CD4-positive, alpha-beta T cell (primary cell): ENCODE measurements at regions of chr15 and their contacts with region 1.

Region 1: DNA sequence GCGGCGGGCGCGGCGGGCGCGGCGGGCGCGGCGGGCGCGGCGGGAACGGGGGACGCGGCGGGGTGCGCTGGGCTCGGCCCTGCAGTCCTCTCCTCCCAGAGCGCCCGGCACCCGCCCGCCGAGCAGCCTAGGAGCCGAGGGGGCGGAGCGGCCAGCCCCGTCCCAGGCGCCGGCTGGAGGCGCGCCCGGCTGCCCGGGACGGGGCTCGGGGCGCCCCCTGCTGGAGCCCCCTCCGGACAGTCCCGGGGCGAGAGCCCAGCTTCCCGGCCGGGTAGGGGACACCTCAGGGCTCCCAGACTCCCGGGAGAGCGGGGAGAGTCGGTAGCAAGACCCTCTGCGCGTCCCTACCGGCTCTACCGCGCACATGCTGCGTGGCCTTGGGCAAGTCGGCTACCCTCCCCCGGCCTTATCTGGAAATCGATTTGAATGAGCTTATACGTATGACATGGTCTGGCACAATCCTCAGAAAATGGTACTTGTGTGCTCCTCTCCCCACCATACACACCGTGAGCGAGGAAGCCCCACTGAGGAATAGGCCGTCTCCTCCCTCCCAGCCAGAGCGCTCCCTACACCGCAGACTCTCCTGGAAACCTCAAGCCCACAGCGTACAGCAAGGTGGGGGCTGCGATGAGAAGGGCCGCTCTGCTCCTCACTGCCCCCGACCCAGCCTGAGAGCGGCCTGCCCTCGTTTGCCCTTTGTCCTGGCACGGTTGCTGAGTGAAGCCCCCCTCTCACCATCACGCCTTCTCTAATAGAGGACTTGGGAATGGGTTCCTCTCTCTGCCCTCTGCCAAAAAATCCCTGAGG is at the start of gene DAPK2:
- DNase-seq: peak; percentile 16 to 85 (median 64)
- ATAC-seq: peak; percentile 78
- H3K4me3 ChIP-seq: peak within 1 kb of the TSS; percentile 50
- H3K4me3 Mint-ChIP-seq: peak within 1 kb of the TSS; percentile 80
- H3K27ac ChIP-seq: no peak within 1 kb of the TSS
- H3K27ac Mint-ChIP-seq: no peak within 1 kb of the TSS
- H3K4me1 ChIP-seq: peaks cover 18% of the 10 kb centered on the region
- H3K4me1 Mint-ChIP-seq: peaks cover 10% of the 10 kb centered on the region
- H3K27me3 ChIP-seq: peaks cover 0 to 9% of the 10 kb centered on the region in 2 experiments
- H3K27me3 Mint-ChIP-seq: peaks cover 20% of the 10 kb centered on the region
- CTCF ChIP-seq: peak; percentile 72
- total RNA-seq, gene DAPK2: 1.3 to 1.6 TPM

Region 2: GRCh38 chr15:63752075-63752684 is 294.4 kb before region 1 on chr15:
- CTCF ChIA-PET with region 1: interaction called, 15 read pairs
- POLR2A ChIA-PET with region 1: interaction called, 10 read pairs
- intact Hi-C with region 1: no loop called
- DNase-seq: peak in 9 of 14 experiments; percentile 15 to 74 (median 24)
- ATAC-seq: peak; percentile 73
- H3K4me3 ChIP-seq: no peak overlapping the region
- H3K4me3 Mint-ChIP-seq: no peak overlapping the region
- H3K27ac ChIP-seq: no peak overlapping the region
- H3K27ac Mint-ChIP-seq: peak overlapping the region; percentile 3
- H3K4me1 ChIP-seq: no peaks in the 10 kb centered on the region
- H3K4me1 Mint-ChIP-seq: peaks cover 6% of the 10 kb centered on the region
- H3K27me3 ChIP-seq: no peaks in the 10 kb centered on the region
- H3K27me3 Mint-ChIP-seq: no peaks in the 10 kb centered on the region
- CTCF ChIP-seq: peak; percentile 80

Region 3: GRCh38 chr15:63826528-63826927 is 220.0 kb before region 1 on chr15:
- CTCF ChIA-PET with region 1: interaction called, 4 read pairs
- POLR2A ChIA-PET with region 1: interaction called, 3 read pairs
- intact Hi-C with region 1: loop called in 1 of 2 experiments (anchors 1 kb)
- DNase-seq: peak in 4 of 14 experiments; percentile 45 to 75 (median 66)
- ATAC-seq: no peak
- H3K4me3 ChIP-seq: no peak overlapping the region
- H3K4me3 Mint-ChIP-seq: peak overlapping the region; percentile 74
- H3K27ac ChIP-seq: no peak overlapping the region
- H3K27ac Mint-ChIP-seq: peak overlapping the region; percentile 62
- H3K4me1 ChIP-seq: peaks cover 21% of the 10 kb centered on the region
- H3K4me1 Mint-ChIP-seq: peaks cover 91% of the 10 kb centered on the region
- H3K27me3 ChIP-seq: no peaks in the 10 kb centered on the region
- H3K27me3 Mint-ChIP-seq: no peaks in the 10 kb centered on the region
- CTCF ChIP-seq: peak; percentile 62

Region 4: GRCh38 chr15:63945007-63945788 is 101.4 kb before region 1 on chr15:
- CTCF ChIA-PET with region 1: interaction called, 36 read pairs
- POLR2A ChIA-PET with region 1: interaction called, 3 read pairs
- intact Hi-C with region 1: loop called (anchors 1 to 5 kb)
- DNase-seq: peak; percentile 44 to 77 (median 59)
- ATAC-seq: peak; percentile 98
- H3K4me3 ChIP-seq: no peak overlapping the region
- H3K4me3 Mint-ChIP-seq: no peak overlapping the region
- H3K27ac ChIP-seq: no peak overlapping the region
- H3K27ac Mint-ChIP-seq: peak overlapping the region; percentile 21
- H3K4me1 ChIP-seq: peaks cover 13% of the 10 kb centered on the region
- H3K4me1 Mint-ChIP-seq: peaks cover 16% of the 10 kb centered on the region
- H3K27me3 ChIP-seq: no peaks in the 10 kb centered on the region
- H3K27me3 Mint-ChIP-seq: no peaks in the 10 kb centered on the region
- CTCF ChIP-seq: peak; percentile 93

Region 5: DNA sequence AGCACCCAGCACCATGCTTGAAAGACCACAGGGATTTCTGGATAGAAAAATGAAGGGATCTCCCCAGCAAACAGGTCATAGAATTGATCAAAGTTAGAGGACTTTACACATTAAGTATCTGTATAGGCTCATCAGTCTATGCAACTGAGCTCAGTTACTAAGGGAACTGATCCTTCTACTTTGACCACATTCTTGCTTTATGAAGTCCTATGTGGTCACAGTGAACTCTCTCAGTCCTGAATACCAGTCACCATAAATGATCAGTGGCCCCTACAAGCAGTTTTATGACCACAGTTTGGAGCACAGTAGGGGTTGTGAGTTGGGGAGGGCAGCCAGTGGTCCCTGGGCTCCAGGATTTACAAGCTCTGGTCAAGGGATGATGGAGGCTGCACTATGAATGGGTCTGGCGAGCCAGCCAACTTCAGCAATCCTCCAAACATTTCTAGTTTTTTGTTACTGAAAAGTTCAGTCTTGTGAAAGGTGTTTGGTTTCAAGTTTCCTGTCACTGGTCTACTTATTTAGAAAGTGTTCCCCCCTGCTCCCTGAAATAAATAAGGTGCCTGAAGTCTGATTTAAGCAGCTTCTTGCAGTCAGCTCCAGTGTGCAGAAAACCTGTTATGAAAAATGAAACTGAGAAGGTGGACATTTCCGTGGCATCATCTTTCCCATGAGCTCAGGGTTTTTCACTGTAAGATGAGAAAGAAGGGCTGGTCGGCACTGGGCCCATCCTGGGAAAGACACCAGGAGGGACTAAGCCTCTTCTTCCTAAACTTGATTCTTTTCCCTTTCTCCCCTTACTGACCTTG is 75.7 kb before region 1 on chr15:
- CTCF ChIA-PET with region 1: interaction called, 11 read pairs
- POLR2A ChIA-PET with region 1: no interaction called
- intact Hi-C with region 1: no loop called
- DNase-seq: peak in 3 of 14 experiments; percentile 14 to 33 (median 27)
- ATAC-seq: peak; percentile 63
- H3K4me3 ChIP-seq: no peak overlapping the region
- H3K4me3 Mint-ChIP-seq: peak overlapping the region; percentile 72
- H3K27ac ChIP-seq: peak overlapping the region in 1 of 2 donors; percentile 63
- H3K27ac Mint-ChIP-seq: peak overlapping the region; percentile 85
- H3K4me1 ChIP-seq: peaks cover 39% of the 10 kb centered on the region
- H3K4me1 Mint-ChIP-seq: peaks cover 41% of the 10 kb centered on the region
- H3K27me3 ChIP-seq: no peaks in the 10 kb centered on the region
- H3K27me3 Mint-ChIP-seq: no peaks in the 10 kb centered on the region
- CTCF ChIP-seq: no peak

Region 6: DNA sequence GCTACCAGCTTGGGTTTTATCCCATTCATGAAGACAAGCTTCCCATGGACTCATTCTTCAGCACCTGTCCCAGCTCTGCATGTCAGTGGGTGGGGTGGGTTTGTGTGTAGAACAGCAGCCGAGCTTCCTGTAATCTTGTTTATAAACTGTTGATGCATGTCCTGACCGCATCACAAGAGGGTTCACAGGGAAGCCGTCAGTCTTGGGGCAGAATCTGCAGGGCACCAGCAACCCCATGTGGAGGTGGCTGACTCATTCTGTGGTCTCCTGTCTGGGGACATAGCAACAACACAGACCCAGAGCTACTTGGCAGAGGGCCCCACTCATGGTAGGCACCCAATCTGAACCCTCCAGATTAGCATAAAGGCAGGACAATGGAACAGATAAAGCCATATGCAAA is 35.8 kb before region 1 on chr15:
- CTCF ChIA-PET with region 1: interaction called, 40 read pairs
- POLR2A ChIA-PET with region 1: interaction called, 10 read pairs
- intact Hi-C with region 1: no loop called
- DNase-seq: peak; percentile 75 to 95 (median 83)
- ATAC-seq: peak; percentile 93
- H3K4me3 ChIP-seq: no peak overlapping the region
- H3K4me3 Mint-ChIP-seq: peak overlapping the region; percentile 66
- H3K27ac ChIP-seq: peak overlapping the region; percentile 64 to 72
- H3K27ac Mint-ChIP-seq: peak overlapping the region; percentile 93
- H3K4me1 ChIP-seq: peaks cover 38% of the 10 kb centered on the region
- H3K4me1 Mint-ChIP-seq: peaks cover 41% of the 10 kb centered on the region
- H3K27me3 ChIP-seq: no peaks in the 10 kb centered on the region
- H3K27me3 Mint-ChIP-seq: no peaks in the 10 kb centered on the region
- CTCF ChIP-seq: peak; percentile 52

Region 7: DNA sequence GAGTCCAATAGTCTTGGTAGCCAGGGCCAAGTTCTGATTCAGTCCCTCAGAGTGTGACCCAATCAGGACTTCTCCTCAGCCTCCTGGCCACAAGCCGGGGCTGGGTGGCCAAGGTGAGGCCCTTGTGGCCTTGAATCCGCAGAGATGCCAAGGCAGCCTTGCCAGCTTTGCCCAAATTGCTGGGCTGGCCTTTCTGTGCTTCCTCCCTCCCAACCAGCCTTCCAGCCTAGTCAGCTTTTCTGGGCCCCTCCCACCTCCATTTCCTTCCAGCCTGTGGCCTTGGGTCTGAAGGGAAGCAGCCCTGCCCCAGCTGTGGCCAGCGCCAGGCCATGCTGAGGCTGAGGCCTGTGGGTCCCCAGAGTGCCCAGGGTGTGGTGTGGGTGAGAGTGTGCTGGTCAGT is 830.9 kb after region 1 on chr15:
- CTCF ChIA-PET with region 1: no interaction called
- POLR2A ChIA-PET with region 1: no interaction called
- intact Hi-C with region 1: no loop called
- DNase-seq: peak in 3 of 14 experiments; percentile 34 to 41 (median 41)
- ATAC-seq: no peak
- H3K4me3 ChIP-seq: no peak overlapping the region
- H3K4me3 Mint-ChIP-seq: no peak overlapping the region
- H3K27ac ChIP-seq: no peak overlapping the region
- H3K27ac Mint-ChIP-seq: no peak overlapping the region
- H3K4me1 ChIP-seq: peaks cover 47% of the 10 kb centered on the region
- H3K4me1 Mint-ChIP-seq: peaks cover 20% of the 10 kb centered on the region
- H3K27me3 ChIP-seq: no peaks in the 10 kb centered on the region
- H3K27me3 Mint-ChIP-seq: no peaks in the 10 kb centered on the region
- CTCF ChIP-seq: no peak